ENCODE measurements at regions of chr13 and their contacts with region 1.

Region 1: GRCh38 chr13:47774671-47774994 is 226.4 kb downstream of the SUCLA2 start:
- DNase-seq: no peak

Region 2: GRCh38 chr13:46831588-46832194 is 942.9 kb before region 1 on chr13:
- intact Hi-C with region 1: loop called (anchors 2 kb)
- DNase-seq: peak in 4 of 10 donors; percentile 34 to 45 (median 37)

Region 3: DNA sequence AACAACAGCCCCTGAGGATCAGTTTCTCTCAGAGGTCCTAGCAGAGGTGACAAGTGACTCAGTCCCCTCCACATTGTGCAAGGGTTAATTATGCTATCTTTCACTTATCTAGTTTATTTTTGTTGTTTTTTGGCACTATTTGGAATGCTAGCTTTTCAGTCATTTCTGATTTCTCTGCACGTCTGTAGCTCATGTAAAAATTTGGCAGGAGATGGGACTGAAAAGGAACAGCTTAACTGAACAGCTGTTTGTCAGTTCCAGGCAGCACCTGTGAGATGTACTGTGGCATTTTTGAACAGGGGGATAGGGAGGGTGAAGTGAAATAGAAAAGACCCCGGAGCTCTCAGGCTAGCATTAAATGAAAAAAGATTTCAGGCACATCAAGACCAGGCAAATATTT is 87.1 kb before region 1 on chr13:
- intact Hi-C with region 1: no loop called
- DNase-seq: no peak

Measured in posterior cingulate gyrus (tissue), 11 donors.